ENCODE measurements at regions of chr6 and their contacts with region 1.

Region 1: GRCh38 chr6:83057705-83058321 is 7.8 kb downstream of the UBE3D start:
- DNase-seq: peak; percentile 26
- H3K4me3 ChIP-seq: no peak overlapping the region
- H3K27ac ChIP-seq: no peak overlapping the region
- H3K4me1 ChIP-seq: peaks cover 0 to 3% (median 0%) of the 10 kb centered on the region in 4 donors
- H3K27me3 ChIP-seq: no peaks in the 10 kb centered on the region
- CTCF ChIP-seq: peak; percentile 47 to 59 (median 52)
- EP300 ChIP-seq: no peak
- POLR2A ChIP-seq: no peak

Region 2: DNA sequence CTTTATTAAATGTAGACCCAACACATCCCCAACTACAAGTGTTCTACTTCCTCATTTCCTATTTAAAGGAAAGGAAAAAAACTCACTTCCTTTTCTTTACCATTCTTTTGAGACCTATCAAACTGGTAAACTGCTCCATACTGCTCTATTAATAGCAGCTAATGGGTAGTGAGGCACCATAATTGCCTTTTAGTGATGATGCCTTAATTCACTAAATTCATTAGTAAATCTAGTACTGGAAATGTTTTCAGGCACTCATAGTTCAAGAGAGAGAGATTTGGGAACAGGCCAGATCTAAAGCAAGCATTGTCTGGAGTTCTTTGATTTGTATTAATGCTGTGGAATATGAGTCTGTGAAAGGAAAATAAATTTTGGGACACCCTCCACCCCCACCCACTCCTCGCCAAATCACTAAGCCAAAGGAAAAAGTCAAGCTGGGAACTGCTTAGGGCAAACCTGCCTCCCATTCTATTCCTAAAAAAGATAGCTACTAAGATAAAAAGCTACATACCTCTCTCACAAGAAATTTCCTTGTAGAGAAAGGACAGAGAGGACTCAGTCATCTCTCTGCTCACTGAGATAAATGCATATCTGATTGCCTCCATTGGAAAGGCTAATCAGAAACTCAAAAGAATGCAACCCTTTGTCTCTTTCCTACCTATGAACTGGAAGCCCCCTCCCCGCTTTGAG is 796.7 kb before region 1 on chr6:
- in situ Hi-C with region 1: loop called in 1 of 4 experiments (anchors 5 kb)
- intact Hi-C with region 1: no loop called
- DNase-seq: no peak
- H3K4me3 ChIP-seq: no peak overlapping the region
- H3K27ac ChIP-seq: no peak overlapping the region
- H3K4me1 ChIP-seq: no peaks in the 10 kb centered on the region
- H3K27me3 ChIP-seq: no peaks in the 10 kb centered on the region
- CTCF ChIP-seq: no peak
- EP300 ChIP-seq: no peak
- POLR2A ChIP-seq: no peak

Region 3: DNA sequence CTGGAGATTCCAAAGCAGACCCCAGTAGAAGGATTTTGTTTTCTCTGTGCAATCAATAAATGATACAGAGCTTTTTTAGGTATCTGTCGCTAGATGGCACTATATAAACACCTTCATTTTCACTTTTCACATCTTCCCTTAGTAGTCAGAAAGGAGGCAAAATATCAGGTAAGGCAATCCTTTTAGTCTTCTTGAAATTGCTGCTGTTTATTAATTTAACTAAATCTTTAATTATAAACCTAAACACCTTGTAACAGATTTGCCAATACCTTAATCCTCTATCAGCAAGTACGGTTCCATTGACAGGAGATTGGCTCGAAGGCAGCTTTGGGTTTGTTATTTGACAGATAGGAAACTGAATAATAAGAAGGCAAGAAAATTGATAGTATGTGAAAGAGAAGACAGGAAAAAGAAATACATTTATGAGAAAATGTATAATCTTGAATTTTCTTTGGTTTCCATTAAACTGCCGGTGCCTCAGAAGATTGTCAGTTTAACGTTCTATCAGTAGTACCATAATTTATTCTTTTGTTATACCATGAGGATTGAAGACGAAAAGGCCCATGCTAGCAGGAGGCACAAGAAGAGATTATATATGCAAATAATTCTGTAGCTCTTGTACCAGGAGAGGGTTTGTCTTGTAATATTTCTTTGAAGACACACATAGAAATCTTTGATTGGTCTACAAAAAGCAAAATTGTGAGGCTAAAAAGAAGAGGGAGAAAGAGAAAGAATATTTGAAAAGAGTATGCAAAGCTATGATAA is 786.8 kb before region 1 on chr6:
- in situ Hi-C with region 1: loop called in 3 of 4 experiments (anchors 5 to 10 kb)
- intact Hi-C with region 1: loop called (anchors 5 kb)
- DNase-seq: no peak
- H3K4me3 ChIP-seq: no peak overlapping the region
- H3K27ac ChIP-seq: no peak overlapping the region
- H3K4me1 ChIP-seq: no peaks in the 10 kb centered on the region
- H3K27me3 ChIP-seq: no peaks in the 10 kb centered on the region
- CTCF ChIP-seq: peak; percentile 42 to 56 (median 53)
- EP300 ChIP-seq: no peak
- POLR2A ChIP-seq: no peak

Region 4: GRCh38 chr6:82541306-82541705 is 516.5 kb before region 1 on chr6:
- in situ Hi-C with region 1: no loop called
- intact Hi-C with region 1: no loop called
- DNase-seq: no peak
- H3K4me3 ChIP-seq: no peak overlapping the region
- H3K27ac ChIP-seq: no peak overlapping the region
- H3K4me1 ChIP-seq: no peaks in the 10 kb centered on the region
- H3K27me3 ChIP-seq: no peaks in the 10 kb centered on the region
- CTCF ChIP-seq: no peak
- EP300 ChIP-seq: no peak
- POLR2A ChIP-seq: no peak